B cell (primary cell): ENCODE measurements at regions of chr2 and their contacts with region 1.

Region 1: GRCh38 chr2:60998628-60999545 is 18.6 kb upstream of the PEX13 start:
- DNase-seq: peak; percentile 79
- ATAC-seq: peak; percentile 69
- H3K4me3 ChIP-seq: no peak overlapping the region
- H3K4me3 Mint-ChIP-seq: no peak overlapping the region
- H3K27ac ChIP-seq: no peak overlapping the region
- H3K27ac Mint-ChIP-seq: peak overlapping the region; percentile 65
- H3K4me1 ChIP-seq: peaks cover 31 to 34% of the 10 kb centered on the region in 2 donors
- H3K4me1 Mint-ChIP-seq: peaks cover 42% of the 10 kb centered on the region
- H3K27me3 ChIP-seq: no peaks in the 10 kb centered on the region
- H3K27me3 Mint-ChIP-seq: no peaks in the 10 kb centered on the region
- CTCF ChIP-seq: peak; percentile 89

Region 2: DNA sequence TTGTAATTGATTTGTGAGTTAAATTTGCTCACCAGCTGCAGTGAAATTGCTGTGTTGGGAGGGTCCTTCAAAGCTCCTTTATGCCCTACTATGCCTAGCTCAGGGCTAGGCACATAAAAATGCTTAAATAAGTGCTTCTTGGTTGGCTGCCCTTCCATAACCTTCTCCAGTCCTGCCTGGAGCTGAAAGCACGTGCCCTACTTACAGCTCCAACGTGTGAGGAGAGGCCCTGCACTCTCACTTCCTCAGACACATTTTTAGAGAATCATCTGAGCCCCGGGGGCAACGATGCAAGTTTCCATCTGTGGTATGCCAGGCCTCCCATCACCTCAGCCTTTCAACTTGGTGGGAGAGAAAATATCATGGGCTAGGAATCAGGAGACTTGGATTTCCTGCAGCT is 648.1 kb before region 1 on chr2:
- CTCF ChIA-PET with region 1: no interaction called
- POLR2A ChIA-PET with region 1: no interaction called
- intact Hi-C with region 1: no loop called
- DNase-seq: peak; percentile 87
- ATAC-seq: peak; percentile 22
- H3K4me3 ChIP-seq: no peak overlapping the region
- H3K4me3 Mint-ChIP-seq: peak overlapping the region; percentile 54
- H3K27ac ChIP-seq: peak overlapping the region; percentile 95
- H3K27ac Mint-ChIP-seq: peak overlapping the region; percentile 99
- H3K4me1 ChIP-seq: peaks cover 80 to 89% of the 10 kb centered on the region in 2 donors
- H3K4me1 Mint-ChIP-seq: peaks cover 87% of the 10 kb centered on the region
- H3K27me3 ChIP-seq: no peaks in the 10 kb centered on the region
- H3K27me3 Mint-ChIP-seq: no peaks in the 10 kb centered on the region
- CTCF ChIP-seq: no peak

Region 3: GRCh38 chr2:60806988-60807681 is 191.8 kb before region 1 on chr2:
- CTCF ChIA-PET with region 1: interaction called, 118 read pairs
- POLR2A ChIA-PET with region 1: interaction called, 5 read pairs
- intact Hi-C with region 1: no loop called
- DNase-seq: peak; percentile 32
- ATAC-seq: peak; percentile 56
- H3K4me3 ChIP-seq: no peak overlapping the region
- H3K4me3 Mint-ChIP-seq: no peak overlapping the region
- H3K27ac ChIP-seq: peak overlapping the region; percentile 31 to 55
- H3K27ac Mint-ChIP-seq: peak overlapping the region; percentile 83
- H3K4me1 ChIP-seq: peaks cover 20 to 32% of the 10 kb centered on the region in 2 donors
- H3K4me1 Mint-ChIP-seq: peaks cover 34% of the 10 kb centered on the region
- H3K27me3 ChIP-seq: no peaks in the 10 kb centered on the region
- H3K27me3 Mint-ChIP-seq: no peaks in the 10 kb centered on the region
- CTCF ChIP-seq: no peak

Region 4: DNA sequence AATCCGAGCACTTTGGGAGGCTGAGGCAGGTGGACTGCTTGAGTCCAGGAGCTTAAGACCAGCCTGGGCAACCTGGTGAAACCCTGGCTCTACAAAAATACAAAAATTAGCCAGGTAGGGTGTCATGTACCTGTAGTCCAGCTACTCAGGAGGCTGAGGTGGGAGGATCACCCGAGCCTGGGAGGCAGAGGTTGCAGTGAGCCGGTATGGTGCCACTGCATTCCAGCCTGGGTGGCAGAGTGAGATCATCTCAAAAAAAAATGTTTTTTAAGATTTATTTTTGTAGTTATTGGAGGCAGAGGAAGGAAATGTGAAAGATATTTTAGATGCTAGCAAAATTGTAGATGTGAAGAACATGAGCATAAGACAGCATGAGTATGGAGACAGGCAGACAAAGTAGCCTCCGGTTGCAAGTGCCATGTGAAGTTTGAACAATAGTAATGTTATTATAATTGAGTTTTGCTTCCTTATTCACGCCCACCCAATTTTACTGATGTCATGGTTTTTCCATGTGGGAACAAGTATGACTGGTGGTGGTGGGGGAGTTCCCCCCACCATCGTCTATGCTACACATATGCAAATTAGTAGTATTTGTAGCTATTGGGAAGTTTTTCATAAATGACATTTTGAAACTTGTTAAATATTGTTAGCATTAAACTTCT is 99.5 kb before region 1 on chr2:
- CTCF ChIA-PET with region 1: interaction called, 14 read pairs
- POLR2A ChIA-PET with region 1: no interaction called
- intact Hi-C with region 1: no loop called
- DNase-seq: peak; percentile 59
- ATAC-seq: peak; percentile 58
- H3K4me3 ChIP-seq: no peak overlapping the region
- H3K4me3 Mint-ChIP-seq: peak overlapping the region; percentile 65
- H3K27ac ChIP-seq: peak overlapping the region; percentile 15 to 60
- H3K27ac Mint-ChIP-seq: peak overlapping the region; percentile 89
- H3K4me1 ChIP-seq: peaks cover 11 to 15% of the 10 kb centered on the region in 2 donors
- H3K4me1 Mint-ChIP-seq: peaks cover 29% of the 10 kb centered on the region
- H3K27me3 ChIP-seq: no peaks in the 10 kb centered on the region
- H3K27me3 Mint-ChIP-seq: no peaks in the 10 kb centered on the region
- CTCF ChIP-seq: no peak

Region 5: DNA sequence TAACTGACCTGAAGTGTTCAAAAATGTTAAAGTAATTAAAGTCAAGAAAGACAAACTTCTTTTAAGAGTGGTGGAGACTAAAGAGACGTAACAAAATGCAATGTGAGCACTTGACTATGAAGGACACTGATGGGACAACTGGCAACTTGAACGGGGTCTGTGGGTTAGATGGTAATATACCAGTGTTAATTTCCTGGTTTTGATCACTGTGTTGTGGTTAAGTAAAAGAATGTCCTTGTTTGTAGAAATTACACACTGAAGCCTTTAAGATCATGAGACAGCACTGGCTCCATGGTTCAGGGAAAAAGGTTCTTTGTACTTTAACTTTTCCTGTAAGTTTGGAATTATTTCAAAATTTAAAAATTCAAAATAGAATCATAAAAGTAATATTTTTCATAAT is 59.3 kb before region 1 on chr2:
- CTCF ChIA-PET with region 1: interaction called, 13 read pairs
- POLR2A ChIA-PET with region 1: interaction called, 3 read pairs
- intact Hi-C with region 1: no loop called
- DNase-seq: no peak
- ATAC-seq: no peak
- H3K4me3 ChIP-seq: no peak overlapping the region
- H3K4me3 Mint-ChIP-seq: no peak overlapping the region
- H3K27ac ChIP-seq: no peak overlapping the region
- H3K27ac Mint-ChIP-seq: peak overlapping the region; percentile 71
- H3K4me1 ChIP-seq: no peaks in the 10 kb centered on the region
- H3K4me1 Mint-ChIP-seq: peaks cover 29% of the 10 kb centered on the region
- H3K27me3 ChIP-seq: no peaks in the 10 kb centered on the region
- H3K27me3 Mint-ChIP-seq: no peaks in the 10 kb centered on the region
- CTCF ChIP-seq: no peak

Region 6: GRCh38 chr2:60972889-60973656 is 25.8 kb before region 1 on chr2:
- CTCF ChIA-PET with region 1: interaction called, 52 read pairs
- POLR2A ChIA-PET with region 1: interaction called, 24 read pairs
- intact Hi-C with region 1: no loop called
- DNase-seq: no peak
- ATAC-seq: peak; percentile 2
- H3K4me3 ChIP-seq: peak overlapping the region in 2 of 5 experiments; percentile 7 to 8
- H3K4me3 Mint-ChIP-seq: peak overlapping the region; percentile 82
- H3K27ac ChIP-seq: peak overlapping the region; percentile 77 to 85
- H3K27ac Mint-ChIP-seq: peak overlapping the region; percentile 96
- H3K4me1 ChIP-seq: peaks cover 41 to 58% of the 10 kb centered on the region in 2 donors
- H3K4me1 Mint-ChIP-seq: peaks cover 74% of the 10 kb centered on the region
- H3K27me3 ChIP-seq: no peaks in the 10 kb centered on the region
- H3K27me3 Mint-ChIP-seq: no peaks in the 10 kb centered on the region
- CTCF ChIP-seq: no peak

Region 7: DNA sequence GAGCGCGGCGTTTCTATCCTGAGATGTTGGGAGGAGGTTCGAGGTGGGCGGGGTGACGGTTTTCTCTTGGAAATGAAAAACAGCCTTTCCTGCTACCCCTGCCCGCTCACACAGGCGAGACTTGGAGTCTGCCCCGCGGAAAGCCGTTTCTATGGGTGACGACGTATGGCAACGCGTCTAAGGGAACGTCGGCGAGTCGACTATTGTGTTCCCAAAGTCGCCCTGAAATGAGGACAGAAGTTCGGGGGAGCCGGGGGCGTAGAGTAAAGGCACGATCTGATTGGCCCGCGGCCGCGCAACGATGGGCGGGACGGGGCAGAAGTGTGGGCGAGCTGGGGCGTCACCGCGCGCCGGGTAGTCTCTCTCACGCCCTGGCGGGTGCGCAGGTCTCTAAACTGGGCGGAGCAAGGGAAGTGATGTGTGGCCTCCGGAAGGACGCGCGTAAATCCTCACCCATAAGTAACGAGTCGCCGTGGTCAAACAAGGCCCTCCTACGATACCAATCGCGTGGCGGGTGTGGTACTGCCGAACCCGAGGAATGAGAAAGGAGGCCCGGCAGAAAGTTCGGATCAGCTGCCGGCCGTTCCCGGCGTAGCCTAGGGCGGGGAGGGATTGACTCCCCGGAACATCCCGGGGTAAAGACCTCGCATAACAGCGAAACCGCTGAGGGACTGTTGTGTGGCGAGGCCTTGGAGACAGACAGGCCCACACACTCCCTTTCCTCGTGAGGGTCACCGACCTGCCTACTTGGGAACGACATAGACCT is 765.3 kb after region 1 on chr2:
- CTCF ChIA-PET with region 1: no interaction called
- POLR2A ChIA-PET with region 1: no interaction called
- intact Hi-C with region 1: no loop called
- DNase-seq: peak; percentile 98
- ATAC-seq: peak; percentile 98
- H3K4me3 ChIP-seq: peak overlapping the region; percentile 89 to 94 (median 92)
- H3K4me3 Mint-ChIP-seq: peak overlapping the region; percentile 90
- H3K27ac ChIP-seq: peak overlapping the region; percentile 96 to 98
- H3K27ac Mint-ChIP-seq: peak overlapping the region; percentile 96
- H3K4me1 ChIP-seq: peaks cover 4 to 10% of the 10 kb centered on the region in 2 donors
- H3K4me1 Mint-ChIP-seq: peaks cover 14% of the 10 kb centered on the region
- H3K27me3 ChIP-seq: no peaks in the 10 kb centered on the region
- H3K27me3 Mint-ChIP-seq: peaks cover 2% of the 10 kb centered on the region
- CTCF ChIP-seq: no peak

Region 8: GRCh38 chr2:61878756-61879155 is 879.9 kb after region 1 on chr2:
- CTCF ChIA-PET with region 1: no interaction called
- POLR2A ChIA-PET with region 1: no interaction called
- intact Hi-C with region 1: no loop called
- DNase-seq: no peak
- ATAC-seq: no peak
- H3K4me3 ChIP-seq: no peak overlapping the region
- H3K4me3 Mint-ChIP-seq: no peak overlapping the region
- H3K27ac ChIP-seq: no peak overlapping the region
- H3K27ac Mint-ChIP-seq: no peak overlapping the region
- H3K4me1 ChIP-seq: no peaks in the 10 kb centered on the region
- H3K4me1 Mint-ChIP-seq: no peaks in the 10 kb centered on the region
- H3K27me3 ChIP-seq: no peaks in the 10 kb centered on the region
- H3K27me3 Mint-ChIP-seq: no peaks in the 10 kb centered on the region
- CTCF ChIP-seq: no peak